Activated B cell treated with CpG ODN at 0.5 μM for 24 hours (primary cell): ENCODE measurements at regions of chr19 and their contacts with region 1.

Region 1: GRCh38 chr19:57769345-57770131 is at the start of gene ZNF586:
- DNase-seq: peak; percentile 76
- ATAC-seq: peak; percentile 98
- H3K4me3 Mint-ChIP-seq: peak within 1 kb of the TSS; percentile 95
- H3K27ac Mint-ChIP-seq: peak within 1 kb of the TSS; percentile 86
- H3K4me1 Mint-ChIP-seq: peaks cover 54% of the 10 kb centered on the region
- H3K27me3 Mint-ChIP-seq: no peaks in the 10 kb centered on the region
- CTCF ChIP-seq: no peak
- total RNA-seq, gene ZNF586: 29.4 and 33.7 TPM in 2 replicates

Region 2: GRCh38 chr19:57746580-57747471 is 22.7 kb before region 1 on chr19 and contains the start of gene ZNF776:
- CTCF ChIA-PET with region 1: no interaction called
- POLR2A ChIA-PET with region 1: interaction called, 20 read pairs
- intact Hi-C with region 1: loop called (anchors 1 kb)
- DNase-seq: peak; percentile 54
- ATAC-seq: peak; percentile 95
- H3K4me3 Mint-ChIP-seq: peak within 1 kb of the TSS; percentile 91
- H3K27ac Mint-ChIP-seq: peak within 1 kb of the TSS; percentile 87
- H3K4me1 Mint-ChIP-seq: peaks cover 42% of the 10 kb centered on the region
- H3K27me3 Mint-ChIP-seq: no peaks in the 10 kb centered on the region
- CTCF ChIP-seq: no peak
- total RNA-seq, gene ZNF776: 26.5 and 29.9 TPM in 2 replicates